B cell (primary cell): ENCODE measurements at regions of chr19 and their contacts with region 1.

Region 1: GRCh38 chr19:51926784-51927742 is at the start of gene ZNF613:
- DNase-seq: peak; percentile 94
- ATAC-seq: peak; percentile 92
- H3K4me3 ChIP-seq: peak within 1 kb of the TSS; percentile 78 to 93 (median 86)
- H3K4me3 Mint-ChIP-seq: peak within 1 kb of the TSS; percentile 90
- H3K27ac ChIP-seq: peak within 1 kb of the TSS; percentile 72 to 76
- H3K27ac Mint-ChIP-seq: peak within 1 kb of the TSS; percentile 84
- H3K4me1 ChIP-seq: peaks cover 10 to 14% of the 10 kb centered on the region in 2 donors
- H3K4me1 Mint-ChIP-seq: peaks cover 22% of the 10 kb centered on the region
- H3K27me3 ChIP-seq: no peaks in the 10 kb centered on the region
- H3K27me3 Mint-ChIP-seq: no peaks in the 10 kb centered on the region
- CTCF ChIP-seq: peak; percentile 26
- total RNA-seq, gene ZNF613: 7.0 and 11.2 TPM in 2 replicates

Region 2: DNA sequence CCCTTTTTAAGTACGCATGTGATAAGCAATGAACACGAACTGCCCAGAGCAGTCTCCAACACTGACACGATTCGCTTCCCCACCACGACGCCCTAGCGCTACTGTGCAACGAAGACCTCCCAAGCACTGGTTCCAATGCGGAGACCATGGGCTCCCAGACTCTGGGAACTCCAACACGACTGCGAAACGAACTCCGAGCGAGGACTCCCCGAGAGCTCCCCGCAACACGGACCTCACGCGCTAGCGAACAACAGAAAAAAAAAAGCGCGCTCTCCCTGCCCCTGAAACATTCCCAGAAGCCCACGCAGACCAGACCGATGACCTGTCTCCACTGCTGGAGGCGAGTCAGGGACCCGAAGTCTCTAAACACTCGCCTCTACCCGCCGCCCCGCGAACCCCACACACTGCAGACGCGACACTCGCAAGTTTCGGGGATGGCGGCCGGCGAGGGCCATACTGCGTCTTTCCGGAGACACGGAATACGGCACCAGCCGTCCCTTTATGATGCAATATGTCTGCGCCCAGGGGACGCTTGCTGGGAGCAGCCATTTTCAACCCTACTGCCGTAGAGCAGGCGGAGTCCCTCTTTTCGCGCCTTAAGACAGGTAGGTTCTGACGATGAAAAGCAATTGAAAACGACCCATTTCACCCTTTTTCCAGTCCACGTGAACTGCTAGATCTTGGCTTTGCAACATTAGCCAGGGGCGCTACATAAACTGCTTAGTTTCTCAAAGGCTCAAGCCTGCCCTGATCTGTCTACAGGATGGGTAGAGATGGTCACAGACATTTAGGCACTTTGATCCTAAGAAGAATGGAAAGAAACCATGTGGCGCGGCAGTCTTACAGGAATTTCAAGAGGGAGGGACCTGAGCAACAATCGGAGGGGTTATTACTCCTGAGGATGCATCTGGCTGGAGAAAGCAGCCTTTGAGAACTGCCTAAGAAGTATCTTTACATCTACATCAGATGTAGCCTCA is 39.3 kb before region 1 on chr19 and contains the start of gene ZNF577:
- CTCF ChIA-PET with region 1: no interaction called
- POLR2A ChIA-PET with region 1: no interaction called
- intact Hi-C with region 1: loop called (anchors 5 kb)
- DNase-seq: peak; percentile 78
- ATAC-seq: peak; percentile 90
- H3K4me3 ChIP-seq: peak within 1 kb of the TSS; percentile 47 to 70 (median 54)
- H3K4me3 Mint-ChIP-seq: peak within 1 kb of the TSS; percentile 94
- H3K27ac ChIP-seq: peak within 1 kb of the TSS in 1 of 2 donors; percentile 49
- H3K27ac Mint-ChIP-seq: peak within 1 kb of the TSS; percentile 88
- H3K4me1 ChIP-seq: peaks cover 0 to 4% of the 10 kb centered on the region in 2 donors
- H3K4me1 Mint-ChIP-seq: no peaks in the 10 kb centered on the region
- H3K27me3 ChIP-seq: no peaks in the 10 kb centered on the region
- H3K27me3 Mint-ChIP-seq: no peaks in the 10 kb centered on the region
- CTCF ChIP-seq: no peak
- total RNA-seq, gene ZNF577: 26.0 and 27.9 TPM in 2 replicates

Region 3: GRCh38 chr19:51904331-51905165 is 22.5 kb before region 1 on chr19 and contains the start of gene ZNF649:
- CTCF ChIA-PET with region 1: no interaction called
- POLR2A ChIA-PET with region 1: no interaction called
- intact Hi-C with region 1: loop called (anchors 1 kb)
- DNase-seq: peak; percentile 90
- ATAC-seq: peak; percentile 95
- H3K4me3 ChIP-seq: peak within 1 kb of the TSS; percentile 66 to 97 (median 91)
- H3K4me3 Mint-ChIP-seq: peak within 1 kb of the TSS; percentile 99
- H3K27ac ChIP-seq: peak within 1 kb of the TSS; percentile 81 to 83
- H3K27ac Mint-ChIP-seq: peak within 1 kb of the TSS; percentile 98
- H3K4me1 ChIP-seq: peaks cover 6 to 15% of the 10 kb centered on the region in 2 donors
- H3K4me1 Mint-ChIP-seq: peaks cover 21% of the 10 kb centered on the region
- H3K27me3 ChIP-seq: peaks cover 0 to 19% (median 3%) of the 10 kb centered on the region in 4 experiments
- H3K27me3 Mint-ChIP-seq: peaks cover 24% of the 10 kb centered on the region
- CTCF ChIP-seq: no peak
- total RNA-seq, gene ZNF649: 35.7 and 36.3 TPM in 2 replicates

Region 4: GRCh38 chr19:51986309-51987291 is 59.5 kb after region 1 on chr19 and contains the start of gene ZNF350:
- CTCF ChIA-PET with region 1: no interaction called
- POLR2A ChIA-PET with region 1: no interaction called
- intact Hi-C with region 1: loop called (anchors 1 kb)
- DNase-seq: peak; percentile 96
- ATAC-seq: peak; percentile 99
- H3K4me3 ChIP-seq: peak within 1 kb of the TSS; percentile 88 to 100 (median 99)
- H3K4me3 Mint-ChIP-seq: peak within 1 kb of the TSS; percentile 95
- H3K27ac ChIP-seq: peak within 1 kb of the TSS; percentile 75 to 81
- H3K27ac Mint-ChIP-seq: peak within 1 kb of the TSS; percentile 94
- H3K4me1 ChIP-seq: peaks cover 5 to 15% of the 10 kb centered on the region in 2 donors
- H3K4me1 Mint-ChIP-seq: peaks cover 13% of the 10 kb centered on the region
- H3K27me3 ChIP-seq: no peaks in the 10 kb centered on the region
- H3K27me3 Mint-ChIP-seq: no peaks in the 10 kb centered on the region
- CTCF ChIP-seq: no peak
- total RNA-seq, gene ZNF350: 50.2 and 53.0 TPM in 2 replicates

Region 5: DNA sequence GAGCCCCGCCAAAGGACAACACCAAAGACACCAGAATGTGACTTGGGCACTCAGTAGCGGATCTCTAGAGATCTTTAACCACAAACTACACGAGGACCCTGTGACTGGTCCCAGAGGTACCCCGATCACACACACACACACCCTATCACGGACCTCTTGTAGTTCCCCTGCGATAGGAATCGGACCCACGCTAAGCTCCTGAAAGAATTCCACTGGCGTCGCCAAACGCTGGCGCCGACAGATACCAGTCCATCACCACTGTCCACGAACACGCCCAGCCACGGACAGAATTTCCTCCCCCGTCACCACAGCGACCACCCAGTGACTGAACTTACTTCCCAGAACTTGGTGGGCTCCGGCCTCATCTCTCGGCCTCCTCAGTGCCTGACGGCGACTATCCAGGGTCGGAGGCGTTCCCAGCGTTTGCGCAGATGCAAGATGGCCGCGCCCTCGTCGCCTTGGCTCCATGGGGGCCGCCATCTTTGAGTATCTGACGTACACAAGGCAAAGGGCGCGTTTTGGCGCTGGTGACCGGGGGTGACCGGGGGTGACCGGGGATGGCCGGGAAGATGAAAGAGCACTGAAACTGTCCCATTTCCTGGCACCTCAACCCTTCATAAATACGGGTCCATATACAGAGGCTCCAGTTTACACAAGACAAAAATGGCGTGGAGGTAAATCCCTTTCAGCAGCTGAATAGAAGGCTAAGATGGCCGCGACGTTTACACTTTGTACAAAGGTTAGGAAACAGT is 80.9 kb after region 1 on chr19 and contains the start of gene ZNF615:
- CTCF ChIA-PET with region 1: no interaction called
- POLR2A ChIA-PET with region 1: no interaction called
- intact Hi-C with region 1: loop called (anchors 1 kb)
- DNase-seq: peak; percentile 94
- ATAC-seq: peak; percentile 94
- H3K4me3 ChIP-seq: peak within 1 kb of the TSS; percentile 68 to 90 (median 76)
- H3K4me3 Mint-ChIP-seq: peak within 1 kb of the TSS; percentile 92
- H3K27ac ChIP-seq: peak within 1 kb of the TSS; percentile 78 to 88
- H3K27ac Mint-ChIP-seq: peak within 1 kb of the TSS; percentile 98
- H3K4me1 ChIP-seq: peaks cover 9 to 12% of the 10 kb centered on the region in 2 donors
- H3K4me1 Mint-ChIP-seq: peaks cover 17% of the 10 kb centered on the region
- H3K27me3 ChIP-seq: no peaks in the 10 kb centered on the region
- H3K27me3 Mint-ChIP-seq: no peaks in the 10 kb centered on the region
- CTCF ChIP-seq: no peak
- total RNA-seq, gene ZNF615: 16.8 and 24.5 TPM in 2 replicates